Calu3 (cell line): ENCODE measurements at regions of chr22 and their contacts with region 1.

Region 1: GRCh38 chr22:49334449-49334789 is 493.3 kb downstream of the BRD1 start:
- DNase-seq: no peak
- H3K4me3 Mint-ChIP-seq: no peak overlapping the region
- H3K27ac Mint-ChIP-seq: no peak overlapping the region
- H3K4me1 Mint-ChIP-seq: no peaks in the 10 kb centered on the region
- H3K27me3 Mint-ChIP-seq: peaks cover 21% of the 10 kb centered on the region
- CTCF ChIP-seq: no peak

Region 2: DNA sequence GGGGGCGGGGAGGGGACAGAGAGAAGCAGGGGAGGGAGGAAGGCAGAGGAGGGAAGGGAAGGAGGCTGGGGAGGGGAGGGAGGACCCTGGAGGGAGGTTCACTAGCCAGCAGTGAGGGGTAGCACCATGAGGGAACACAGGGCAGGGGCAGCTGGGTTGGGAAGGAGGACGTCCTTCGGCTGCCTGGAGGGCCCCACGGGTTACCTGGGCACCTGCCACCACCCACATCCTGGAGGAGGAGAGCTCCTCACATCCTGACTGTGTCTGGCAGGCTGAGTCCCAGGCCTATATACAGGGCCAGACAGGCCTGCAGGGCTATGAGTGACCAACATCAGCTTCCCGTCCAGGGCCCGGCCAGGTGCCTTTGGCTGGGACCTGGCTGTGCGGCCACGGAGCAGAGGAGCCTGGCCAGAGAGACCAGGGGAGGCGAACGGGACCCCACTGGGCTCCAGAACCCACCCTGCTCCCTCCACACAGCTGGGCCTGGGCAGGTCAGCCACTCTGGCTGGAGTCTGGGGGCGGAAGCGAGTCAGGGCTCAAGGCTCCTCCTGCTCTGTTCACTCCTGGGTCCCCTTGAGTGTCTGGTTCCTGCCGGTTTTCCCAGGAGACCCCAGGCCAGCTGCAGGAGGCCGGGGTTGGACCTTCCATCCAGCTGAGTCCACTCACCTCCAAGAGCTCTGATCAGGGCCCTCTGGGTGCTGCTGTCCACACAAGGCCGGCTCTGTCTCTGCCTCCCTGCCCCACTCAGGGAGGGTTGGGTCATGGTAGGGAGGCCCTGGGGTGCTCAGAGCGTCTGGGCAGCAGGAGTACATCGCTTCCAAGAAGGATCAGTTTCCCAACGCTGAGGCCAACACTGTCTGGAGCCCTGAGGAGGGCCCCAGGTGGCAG is 184.5 kb before region 1 on chr22:
- CTCF ChIA-PET with region 1: no interaction called
- intact Hi-C with region 1: no loop called
- DNase-seq: no peak
- H3K4me3 Mint-ChIP-seq: no peak overlapping the region
- H3K27ac Mint-ChIP-seq: no peak overlapping the region
- H3K4me1 Mint-ChIP-seq: no peaks in the 10 kb centered on the region
- H3K27me3 Mint-ChIP-seq: no peaks in the 10 kb centered on the region
- CTCF ChIP-seq: no peak

Region 3: GRCh38 chr22:49512437-49513165 is 178.2 kb after region 1 on chr22:
- CTCF ChIA-PET with region 1: interaction called, 10 read pairs
- intact Hi-C with region 1: no loop called
- DNase-seq: no peak
- H3K4me3 Mint-ChIP-seq: no peak overlapping the region
- H3K27ac Mint-ChIP-seq: no peak overlapping the region
- H3K4me1 Mint-ChIP-seq: no peaks in the 10 kb centered on the region
- H3K27me3 Mint-ChIP-seq: no peaks in the 10 kb centered on the region
- CTCF ChIP-seq: no peak